ENCODE measurements at regions of chr9 and their contacts with region 1.

Region 1: DNA sequence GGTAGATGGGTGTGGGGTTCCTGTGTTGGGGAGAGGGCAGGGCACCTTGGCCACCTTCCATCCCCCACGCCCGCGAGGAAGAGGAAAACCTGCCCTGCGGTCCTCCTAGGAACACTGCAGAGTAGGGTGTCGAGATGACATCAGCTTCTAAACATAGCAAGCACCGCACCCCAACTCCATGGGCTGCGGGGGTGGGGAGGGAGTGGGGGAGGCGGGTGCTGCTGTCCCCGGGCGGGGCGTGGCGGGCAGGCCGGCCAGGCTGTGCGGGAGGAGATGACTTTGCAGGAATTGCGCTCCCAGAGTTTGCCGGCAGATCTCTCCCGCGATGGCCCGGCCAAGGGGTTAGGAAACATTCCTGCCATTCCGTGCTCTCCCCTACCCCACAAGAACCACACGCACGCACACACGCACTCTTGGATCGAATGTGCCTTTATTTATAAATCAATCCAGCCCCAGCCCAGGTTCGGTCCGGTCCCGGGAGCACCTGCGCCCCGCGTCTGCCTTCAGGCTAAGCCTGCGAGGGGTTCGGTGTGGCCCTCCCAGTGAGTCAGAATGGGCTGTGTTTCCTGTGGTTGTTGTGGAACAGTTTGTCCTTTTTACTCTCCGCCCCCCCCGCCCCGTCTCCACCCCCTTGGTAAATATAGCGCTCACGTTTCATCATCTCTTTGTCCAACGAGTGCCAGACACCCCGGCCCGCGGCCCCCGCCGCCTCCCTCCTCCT is 5.2 kb upstream of the KLF9 start:
- DNase-seq: peak; percentile 89
- ATAC-seq: peak; percentile 51
- H3K4me3 ChIP-seq: peak overlapping the region; percentile 38 to 89 (median 77)
- H3K4me3 Mint-ChIP-seq: peak overlapping the region; percentile 96
- H3K27ac ChIP-seq: peak overlapping the region; percentile 94 to 99
- H3K27ac Mint-ChIP-seq: peak overlapping the region; percentile 100
- H3K4me1 ChIP-seq: peaks cover 21 to 36% of the 10 kb centered on the region in 2 donors
- H3K4me1 Mint-ChIP-seq: peaks cover 43% of the 10 kb centered on the region
- H3K27me3 ChIP-seq: no peaks in the 10 kb centered on the region
- H3K27me3 Mint-ChIP-seq: no peaks in the 10 kb centered on the region
- CTCF ChIP-seq: no peak

Region 2: DNA sequence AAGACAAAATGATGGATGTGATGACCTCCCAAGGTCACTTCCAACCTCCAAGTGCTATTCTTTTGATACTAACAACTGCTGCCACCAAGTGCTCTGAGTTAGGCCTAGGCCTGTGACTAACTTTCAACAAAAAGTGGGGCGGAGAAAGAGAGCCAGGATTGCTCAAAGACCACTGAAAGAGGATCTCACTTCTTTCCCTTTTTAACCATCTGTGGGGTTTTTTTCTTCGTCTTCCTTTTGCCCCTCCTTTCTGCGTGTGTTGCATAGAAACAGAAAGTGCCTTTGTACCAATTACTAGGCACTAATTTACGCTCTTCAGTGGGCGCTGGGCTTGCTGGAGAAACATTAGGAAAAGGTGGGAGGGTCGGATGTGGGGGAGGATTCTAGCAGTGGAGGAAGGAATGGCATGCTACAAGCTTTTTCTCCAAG is 13.3 kb before region 1 on chr9:
- CTCF ChIA-PET with region 1: interaction called, 9 read pairs
- POLR2A ChIA-PET with region 1: interaction called, 11 read pairs
- intact Hi-C with region 1: loop called (anchors 2 kb)
- DNase-seq: peak; percentile 77
- ATAC-seq: peak; percentile 78
- H3K4me3 ChIP-seq: peak overlapping the region in 2 of 5 experiments; percentile 30 to 39
- H3K4me3 Mint-ChIP-seq: peak overlapping the region; percentile 83
- H3K27ac ChIP-seq: peak overlapping the region; percentile 52 to 75
- H3K27ac Mint-ChIP-seq: peak overlapping the region; percentile 88
- H3K4me1 ChIP-seq: peaks cover 40 to 44% of the 10 kb centered on the region in 2 donors
- H3K4me1 Mint-ChIP-seq: peaks cover 60% of the 10 kb centered on the region
- H3K27me3 ChIP-seq: no peaks in the 10 kb centered on the region
- H3K27me3 Mint-ChIP-seq: no peaks in the 10 kb centered on the region
- CTCF ChIP-seq: no peak

Region 3: GRCh38 chr9:70563431-70564204 is 143.9 kb after region 1 on chr9:
- CTCF ChIA-PET with region 1: no interaction called
- POLR2A ChIA-PET with region 1: no interaction called
- intact Hi-C with region 1: loop called (anchors 5 kb)
- DNase-seq: peak; percentile 69
- ATAC-seq: peak; percentile 85
- H3K4me3 ChIP-seq: peak overlapping the region in 2 of 5 experiments; percentile 22 to 48
- H3K4me3 Mint-ChIP-seq: peak overlapping the region; percentile 73
- H3K27ac ChIP-seq: peak overlapping the region; percentile 52 to 77
- H3K27ac Mint-ChIP-seq: peak overlapping the region; percentile 87
- H3K4me1 ChIP-seq: peaks cover 23% of the 10 kb centered on the region in 2 donors
- H3K4me1 Mint-ChIP-seq: peaks cover 26% of the 10 kb centered on the region
- H3K27me3 ChIP-seq: no peaks in the 10 kb centered on the region
- H3K27me3 Mint-ChIP-seq: no peaks in the 10 kb centered on the region
- CTCF ChIP-seq: no peak

Region 4: GRCh38 chr9:70609542-70610286 is 190.0 kb after region 1 on chr9:
- CTCF ChIA-PET with region 1: no interaction called
- POLR2A ChIA-PET with region 1: no interaction called
- intact Hi-C with region 1: no loop called
- DNase-seq: no peak
- ATAC-seq: no peak
- H3K4me3 ChIP-seq: no peak overlapping the region
- H3K4me3 Mint-ChIP-seq: no peak overlapping the region
- H3K27ac ChIP-seq: no peak overlapping the region
- H3K27ac Mint-ChIP-seq: no peak overlapping the region
- H3K4me1 ChIP-seq: peaks cover 7 to 8% of the 10 kb centered on the region in 2 donors
- H3K4me1 Mint-ChIP-seq: peaks cover 10% of the 10 kb centered on the region
- H3K27me3 ChIP-seq: no peaks in the 10 kb centered on the region
- H3K27me3 Mint-ChIP-seq: peaks cover 8% of the 10 kb centered on the region
- CTCF ChIP-seq: no peak

Measured in B cell (primary cell).